ENCODE measurements at regions of chr16 and their contacts with region 1.

Region 1: DNA sequence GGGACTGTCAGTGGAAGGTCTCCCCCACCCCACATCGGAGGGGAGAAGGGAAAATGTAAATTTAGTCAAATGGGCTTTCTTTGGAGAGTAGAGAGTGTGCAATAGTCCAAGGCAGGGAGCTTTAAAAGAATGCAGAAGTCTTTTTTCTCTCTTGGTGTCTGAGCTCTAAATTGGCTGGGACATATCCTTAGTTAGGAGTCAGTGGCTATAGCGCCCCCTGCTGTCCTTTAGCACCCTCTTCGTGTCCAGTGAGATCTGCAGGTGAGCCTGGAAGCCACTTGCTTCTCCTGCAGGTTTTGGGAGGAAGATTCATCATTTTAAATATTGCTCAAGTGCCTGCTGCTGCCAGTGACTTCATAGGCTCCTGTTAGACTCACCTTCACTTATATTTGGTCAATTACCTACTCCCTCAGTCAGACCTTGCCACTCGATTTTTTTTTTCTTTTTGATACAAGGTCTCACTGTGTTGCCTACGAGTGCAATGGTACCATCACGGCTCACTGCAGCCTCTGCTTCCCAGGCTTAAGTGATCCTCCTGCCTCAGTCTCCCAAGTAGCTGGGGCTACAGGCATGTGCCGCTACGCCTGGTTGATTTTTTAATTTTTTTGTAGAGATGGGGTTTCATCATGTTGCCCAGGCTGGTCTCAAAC is 174.8 kb downstream of the PRKCB start:
- DNase-seq: peak; percentile 11
- H3K4me3 ChIP-seq: no peak overlapping the region
- H3K27ac ChIP-seq: no peak overlapping the region
- H3K27me3 ChIP-seq: no peaks in the 10 kb centered on the region
- CTCF ChIP-seq: peak; percentile 74

Region 2: GRCh38 chr16:23734176-23734893 is 276.2 kb before region 1 on chr16:
- CTCF ChIA-PET with region 1: interaction called, 21 read pairs
- POLR2A ChIA-PET with region 1: no interaction called
- DNase-seq: no peak
- H3K4me3 ChIP-seq: no peak overlapping the region
- H3K27ac ChIP-seq: no peak overlapping the region
- H3K27me3 ChIP-seq: no peaks in the 10 kb centered on the region
- CTCF ChIP-seq: no peak